Caco-2 (cell line): ENCODE measurements at regions of chr5 and their contacts with region 1.

Region 1: DNA sequence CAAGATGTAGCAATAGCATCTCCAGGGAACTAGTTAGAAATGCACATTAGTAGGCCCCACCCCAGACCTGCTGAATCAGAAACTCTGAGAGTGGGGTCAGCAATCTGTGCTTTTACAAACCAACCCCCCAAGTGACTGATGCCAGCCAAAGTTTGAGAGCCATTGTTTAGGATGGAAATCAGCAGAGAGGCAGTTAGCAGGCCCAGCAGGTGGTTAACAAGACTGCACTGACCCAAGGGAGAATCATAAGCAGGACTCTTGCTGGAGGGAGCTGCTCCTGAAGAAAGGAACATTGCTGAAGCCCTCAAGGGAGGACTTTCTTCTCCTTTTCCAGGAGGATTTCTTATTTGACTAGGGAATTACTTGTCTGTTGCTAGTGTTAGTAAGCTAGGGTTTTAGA is 74.2 kb upstream of the SLC12A2 start:
- DNase-seq: no peak
- H3K4me3 ChIP-seq: no peak overlapping the region
- H3K4me3 Mint-ChIP-seq: no peak overlapping the region
- H3K27ac Mint-ChIP-seq: no peak overlapping the region
- H3K4me1 ChIP-seq: no peaks in the 10 kb centered on the region
- H3K4me1 Mint-ChIP-seq: no peaks in the 10 kb centered on the region
- H3K27me3 ChIP-seq: no peaks in the 10 kb centered on the region
- H3K27me3 Mint-ChIP-seq: no peaks in the 10 kb centered on the region
- CTCF ChIP-seq: no peak

Region 2: DNA sequence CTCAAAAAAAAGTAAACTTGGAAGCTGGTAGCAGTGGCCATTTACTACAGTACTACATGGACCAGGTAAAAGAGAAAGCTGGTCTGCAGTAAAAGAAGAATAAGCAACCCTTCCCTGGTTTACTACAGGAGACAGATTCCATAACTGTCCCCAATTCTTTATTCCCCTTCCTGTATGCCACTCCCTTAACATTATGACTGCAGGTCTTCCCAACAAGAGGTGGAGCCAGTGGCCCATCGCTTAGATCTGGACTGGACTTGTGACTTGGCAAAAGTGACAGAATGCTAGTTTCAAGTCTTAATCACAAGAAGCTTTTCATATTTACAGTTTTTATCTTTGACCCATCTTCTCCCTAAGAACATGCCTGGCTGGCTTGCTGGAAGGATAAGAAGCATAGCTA is 31.5 kb after region 1 on chr5:
- CTCF ChIA-PET with region 1: no interaction called
- POLR2A ChIA-PET with region 1: no interaction called
- intact Hi-C with region 1: loop called (anchors 1 kb)
- DNase-seq: no peak
- H3K4me3 ChIP-seq: no peak overlapping the region
- H3K4me3 Mint-ChIP-seq: no peak overlapping the region
- H3K27ac Mint-ChIP-seq: no peak overlapping the region
- H3K4me1 ChIP-seq: peaks cover 19% of the 10 kb centered on the region; the same call in 1 of the 2 replicates
- H3K4me1 Mint-ChIP-seq: peaks cover 15% of the 10 kb centered on the region
- H3K27me3 ChIP-seq: no peaks in the 10 kb centered on the region
- H3K27me3 Mint-ChIP-seq: no peaks in the 10 kb centered on the region
- CTCF ChIP-seq: no peak

Region 3: GRCh38 chr5:128315671-128316070 is 306.3 kb after region 1 on chr5:
- CTCF ChIA-PET with region 1: no interaction called
- POLR2A ChIA-PET with region 1: no interaction called
- intact Hi-C with region 1: no loop called
- DNase-seq: no peak
- H3K4me3 ChIP-seq: no peak overlapping the region
- H3K4me3 Mint-ChIP-seq: no peak overlapping the region
- H3K27ac Mint-ChIP-seq: no peak overlapping the region
- H3K4me1 ChIP-seq: no peaks in the 10 kb centered on the region
- H3K4me1 Mint-ChIP-seq: no peaks in the 10 kb centered on the region
- H3K27me3 ChIP-seq: no peaks in the 10 kb centered on the region; the same call in 1 of the 2 replicates
- H3K27me3 Mint-ChIP-seq: no peaks in the 10 kb centered on the region
- CTCF ChIP-seq: no peak